B cell (primary cell): ENCODE measurements at regions of chrX and their contacts with region 1.

Region 1: DNA sequence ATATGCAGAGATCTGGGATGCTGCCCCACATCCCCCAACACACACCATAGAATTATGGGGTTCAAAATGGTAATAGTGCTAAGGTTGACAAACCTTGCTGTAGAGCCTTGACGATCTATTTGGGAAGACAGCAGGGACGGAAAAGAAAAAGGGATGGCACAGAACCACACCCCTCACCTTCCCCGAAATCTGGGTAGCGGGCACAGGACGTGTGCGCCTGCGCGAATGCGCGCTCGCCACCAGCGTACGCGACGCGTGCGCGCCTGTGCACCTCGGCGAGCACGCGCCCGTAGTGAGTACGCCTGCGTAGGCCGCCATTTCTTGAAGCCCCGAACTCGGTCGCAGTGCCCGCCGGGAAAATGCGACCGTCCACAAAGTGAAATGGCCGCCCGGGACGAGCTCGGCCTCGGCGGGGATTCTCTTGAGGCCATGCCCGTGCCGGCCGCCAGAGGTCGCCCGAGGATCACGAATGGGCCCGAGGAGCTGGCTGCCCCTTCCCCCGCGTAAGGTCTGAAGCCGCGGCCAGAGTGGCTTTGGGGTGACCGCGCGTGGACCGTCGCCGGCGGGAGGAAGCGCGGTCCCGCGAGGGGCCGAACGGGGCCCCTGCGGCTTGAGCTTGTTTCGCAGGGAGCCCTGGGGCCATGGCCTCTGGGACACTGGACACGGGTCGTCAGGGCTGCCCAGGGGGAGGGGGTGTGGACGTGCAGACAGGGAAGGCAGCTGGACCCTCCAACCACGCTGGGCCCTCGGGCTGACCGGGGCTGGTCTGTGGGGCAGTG is 43.6 kb downstream of the ZNF185 start:
- DNase-seq: peak; percentile 93
- ATAC-seq: peak; percentile 93
- H3K4me3 ChIP-seq: peak overlapping the region; percentile 36 to 70 (median 53)
- H3K4me3 Mint-ChIP-seq: peak overlapping the region; percentile 91
- H3K27ac ChIP-seq: peak overlapping the region; percentile 67 to 76
- H3K27ac Mint-ChIP-seq: peak overlapping the region; percentile 91
- H3K4me1 ChIP-seq: peaks cover 5 to 12% of the 10 kb centered on the region in 2 donors
- H3K4me1 Mint-ChIP-seq: peaks cover 9% of the 10 kb centered on the region
- H3K27me3 ChIP-seq: no peaks in the 10 kb centered on the region
- H3K27me3 Mint-ChIP-seq: no peaks in the 10 kb centered on the region
- CTCF ChIP-seq: peak; percentile 81

Region 2: GRCh38 chrX:152897222-152898131 is 44.0 kb before region 1 on chrX and contains the start of gene ZNF185:
- CTCF ChIA-PET with region 1: no interaction called
- POLR2A ChIA-PET with region 1: no interaction called
- intact Hi-C with region 1: no loop called
- DNase-seq: no peak
- ATAC-seq: no peak
- H3K4me3 ChIP-seq: no peak within 1 kb of the TSS
- H3K4me3 Mint-ChIP-seq: peak within 1 kb of the TSS; percentile 33
- H3K27ac ChIP-seq: no peak within 1 kb of the TSS
- H3K27ac Mint-ChIP-seq: no peak within 1 kb of the TSS
- H3K4me1 ChIP-seq: no peaks in the 10 kb centered on the region
- H3K4me1 Mint-ChIP-seq: peaks cover 3% of the 10 kb centered on the region
- H3K27me3 ChIP-seq: peaks cover 0 to 5% (median 0%) of the 10 kb centered on the region in 4 experiments
- H3K27me3 Mint-ChIP-seq: peaks cover 27% of the 10 kb centered on the region
- CTCF ChIP-seq: no peak
- total RNA-seq, gene ZNF185: 0.89 and 1.7 TPM in 2 replicates

Region 3: GRCh38 chrX:152958524-152959465 is 17.3 kb after region 1 on chrX:
- CTCF ChIA-PET with region 1: interaction called, 12 read pairs
- POLR2A ChIA-PET with region 1: interaction called, 4 read pairs
- intact Hi-C with region 1: loop called (anchors 1 kb)
- DNase-seq: peak; percentile 93
- ATAC-seq: peak; percentile 97
- H3K4me3 ChIP-seq: peak overlapping the region in 4 of 5 experiments; percentile 31 to 46 (median 36)
- H3K4me3 Mint-ChIP-seq: peak overlapping the region; percentile 87
- H3K27ac ChIP-seq: peak overlapping the region; percentile 70 to 75
- H3K27ac Mint-ChIP-seq: peak overlapping the region; percentile 96
- H3K4me1 ChIP-seq: peaks cover 5 to 15% of the 10 kb centered on the region in 2 donors
- H3K4me1 Mint-ChIP-seq: peaks cover 8% of the 10 kb centered on the region
- H3K27me3 ChIP-seq: no peaks in the 10 kb centered on the region
- H3K27me3 Mint-ChIP-seq: no peaks in the 10 kb centered on the region
- CTCF ChIP-seq: peak; percentile 77

Region 4: DNA sequence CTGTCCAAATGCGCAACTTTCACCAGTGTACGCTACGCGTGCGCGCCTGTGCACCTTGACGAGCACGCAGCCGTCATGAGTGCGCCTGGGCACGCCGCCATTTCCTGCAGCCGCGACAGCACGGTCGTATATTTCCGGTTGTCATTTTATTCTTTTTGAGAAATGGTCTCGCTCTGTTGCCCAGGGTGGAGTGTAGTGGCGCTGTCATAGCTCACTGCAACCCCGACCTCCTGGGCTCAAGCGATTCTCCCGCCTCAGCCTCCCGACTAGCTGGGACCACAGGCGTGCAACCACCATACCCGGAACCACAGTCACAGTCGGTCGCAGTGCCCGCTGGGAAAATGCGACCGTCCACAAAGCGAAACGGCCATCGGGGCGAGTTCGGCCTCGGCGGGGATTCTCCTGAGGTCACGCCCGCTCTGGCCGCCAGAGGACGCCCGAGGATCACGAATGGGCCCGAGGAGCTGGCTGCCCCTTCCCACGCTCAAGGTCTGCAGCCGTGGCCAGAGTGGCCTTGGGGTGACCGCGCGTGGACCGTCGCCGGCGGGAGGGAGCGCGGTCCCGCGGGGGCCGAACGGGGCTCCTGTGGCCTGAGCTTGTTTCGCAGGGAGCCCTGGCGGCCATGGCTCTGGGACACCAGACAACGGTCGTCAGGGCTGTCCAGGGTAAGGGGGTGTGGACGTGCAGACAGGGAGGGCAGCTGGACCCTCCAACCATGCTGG is 91.0 kb after region 1 on chrX:
- CTCF ChIA-PET with region 1: interaction called, 17 read pairs
- POLR2A ChIA-PET with region 1: interaction called, 4 read pairs
- intact Hi-C with region 1: no loop called
- DNase-seq: peak; percentile 72
- ATAC-seq: peak; percentile 84
- H3K4me3 ChIP-seq: peak overlapping the region in 4 of 5 experiments; percentile 40 to 67 (median 56)
- H3K4me3 Mint-ChIP-seq: peak overlapping the region; percentile 93
- H3K27ac ChIP-seq: peak overlapping the region; percentile 47 to 58
- H3K27ac Mint-ChIP-seq: peak overlapping the region; percentile 96
- H3K4me1 ChIP-seq: peaks cover 0 to 13% of the 10 kb centered on the region in 2 donors
- H3K4me1 Mint-ChIP-seq: peaks cover 11% of the 10 kb centered on the region
- H3K27me3 ChIP-seq: no peaks in the 10 kb centered on the region
- H3K27me3 Mint-ChIP-seq: no peaks in the 10 kb centered on the region
- CTCF ChIP-seq: peak; percentile 81

Region 5: GRCh38 chrX:153470435-153471363 is 529.2 kb after region 1 on chrX and contains the start of gene HAUS7:
- CTCF ChIA-PET with region 1: interaction called, 3 read pairs
- POLR2A ChIA-PET with region 1: interaction called, 3 read pairs
- intact Hi-C with region 1: loop called (anchors 1 kb)
- DNase-seq: peak; percentile 91
- ATAC-seq: peak; percentile 85
- H3K4me3 ChIP-seq: peak within 1 kb of the TSS; percentile 32 to 73 (median 66)
- H3K4me3 Mint-ChIP-seq: peak within 1 kb of the TSS; percentile 88
- H3K27ac ChIP-seq: peak within 1 kb of the TSS; percentile 34 to 39
- H3K27ac Mint-ChIP-seq: peak within 1 kb of the TSS; percentile 82
- H3K4me1 ChIP-seq: peaks cover 5 to 23% of the 10 kb centered on the region in 2 donors
- H3K4me1 Mint-ChIP-seq: peaks cover 16% of the 10 kb centered on the region
- H3K27me3 ChIP-seq: no peaks in the 10 kb centered on the region
- H3K27me3 Mint-ChIP-seq: no peaks in the 10 kb centered on the region
- CTCF ChIP-seq: peak; percentile 37
- total RNA-seq, gene HAUS7: 26.9 and 28.5 TPM in 2 replicates